Psoas muscle (tissue), 8 donors: ENCODE measurements at regions of chr3 and their contacts with region 1.

Region 1: GRCh38 chr3:52670621-52671521 is 14.8 kb downstream of the PBRM1 start:
- DNase-seq: no peak
- ATAC-seq: peak; percentile 88 to 99 (median 96)
- H3K4me3 ChIP-seq: no peak overlapping the region
- H3K27ac ChIP-seq: peak overlapping the region; percentile 57
- H3K4me1 ChIP-seq: peaks cover 7% of the 10 kb centered on the region
- H3K27me3 ChIP-seq: no peaks in the 10 kb centered on the region
- CTCF ChIP-seq: no peak

Region 2: GRCh38 chr3:52458770-52459545 is 211.9 kb before region 1 on chr3:
- intact Hi-C with region 1: no loop called
- DNase-seq: no peak
- ATAC-seq: no peak
- H3K4me3 ChIP-seq: no peak overlapping the region
- H3K27ac ChIP-seq: no peak overlapping the region
- H3K4me1 ChIP-seq: peaks cover 24% of the 10 kb centered on the region
- H3K27me3 ChIP-seq: no peaks in the 10 kb centered on the region
- CTCF ChIP-seq: no peak

Region 3: GRCh38 chr3:52481819-52482521 is 188.9 kb before region 1 on chr3:
- intact Hi-C with region 1: loop called in 1 of 2 experiments (anchors 10 kb)
- DNase-seq: peak; percentile 33 to 67
- ATAC-seq: no peak
- H3K4me3 ChIP-seq: no peak overlapping the region
- H3K27ac ChIP-seq: no peak overlapping the region
- H3K4me1 ChIP-seq: peaks cover 18% of the 10 kb centered on the region
- H3K27me3 ChIP-seq: no peaks in the 10 kb centered on the region
- CTCF ChIP-seq: peak; percentile 35

Region 4: DNA sequence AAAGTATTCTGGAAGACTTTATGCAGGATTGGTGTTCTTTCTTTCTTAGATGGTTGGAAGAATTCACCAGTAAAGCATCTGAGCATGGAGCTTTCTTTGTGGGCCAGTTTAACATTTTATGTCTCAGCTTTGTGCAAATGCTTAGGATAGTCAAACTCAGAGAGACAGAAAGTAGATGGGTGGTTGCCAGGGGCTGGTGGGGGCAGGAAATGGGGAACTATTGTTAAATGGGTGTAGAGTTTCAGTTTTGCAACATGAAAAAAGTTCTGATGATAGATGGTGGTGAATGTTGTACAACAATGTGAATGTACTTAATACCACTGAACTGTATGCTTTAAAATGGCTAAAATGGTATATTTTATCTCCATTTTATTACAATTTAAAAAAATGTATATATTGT is 59.8 kb after region 1 on chr3:
- intact Hi-C with region 1: loop called in 1 of 2 experiments (anchors 2 kb)
- DNase-seq: no peak
- ATAC-seq: no peak
- H3K4me3 ChIP-seq: no peak overlapping the region
- H3K27ac ChIP-seq: no peak overlapping the region
- H3K4me1 ChIP-seq: no peaks in the 10 kb centered on the region
- H3K27me3 ChIP-seq: no peaks in the 10 kb centered on the region
- CTCF ChIP-seq: no peak